AG04449 (cell line): ENCODE measurements at regions of chr1 and their contacts with region 1.

Region 1: DNA sequence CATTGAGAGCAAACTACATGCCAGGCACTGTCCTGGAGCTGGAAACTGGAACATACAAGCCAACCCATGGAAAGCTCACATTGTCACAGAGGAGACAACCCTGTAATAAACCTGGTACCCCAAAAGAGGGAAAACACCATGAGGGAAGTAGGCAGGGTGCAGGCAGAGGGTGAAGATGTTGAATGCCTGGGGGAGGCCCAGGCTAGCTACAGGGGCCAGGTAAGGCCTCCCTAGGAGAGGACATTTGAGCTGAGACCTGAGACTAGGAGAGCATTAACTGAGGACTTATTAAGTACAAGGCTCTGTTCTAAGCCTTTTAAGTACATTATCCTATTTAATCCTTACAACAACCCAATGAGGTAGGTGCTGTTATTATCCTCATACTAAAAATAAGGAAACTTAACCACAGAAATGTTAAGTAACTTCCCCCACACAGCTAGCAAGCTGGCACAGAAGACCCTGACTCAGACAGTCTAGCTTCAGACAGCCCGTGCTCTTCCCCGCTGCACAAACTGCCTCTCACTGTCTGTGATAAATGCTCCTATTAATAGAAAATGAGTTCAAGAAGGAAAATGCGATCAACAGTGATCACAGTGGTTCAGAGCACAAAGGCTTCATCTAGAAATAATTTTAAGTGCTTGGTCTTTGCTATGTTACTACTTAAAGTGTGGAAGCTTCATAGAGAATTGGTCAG is 41.8 kb downstream of the ZNF281 start:
- DNase-seq: peak; percentile 91
- H3K4me3 ChIP-seq: no peak overlapping the region
- CTCF ChIP-seq: no peak

Region 2: GRCh38 chr1:200354243-200354642 is 13.7 kb before region 1 on chr1:
- CTCF ChIA-PET with region 1: interaction called, 10 read pairs
- POLR2A ChIA-PET with region 1: interaction called, 3 read pairs
- DNase-seq: no peak
- H3K4me3 ChIP-seq: no peak overlapping the region
- CTCF ChIP-seq: no peak

Region 3: DNA sequence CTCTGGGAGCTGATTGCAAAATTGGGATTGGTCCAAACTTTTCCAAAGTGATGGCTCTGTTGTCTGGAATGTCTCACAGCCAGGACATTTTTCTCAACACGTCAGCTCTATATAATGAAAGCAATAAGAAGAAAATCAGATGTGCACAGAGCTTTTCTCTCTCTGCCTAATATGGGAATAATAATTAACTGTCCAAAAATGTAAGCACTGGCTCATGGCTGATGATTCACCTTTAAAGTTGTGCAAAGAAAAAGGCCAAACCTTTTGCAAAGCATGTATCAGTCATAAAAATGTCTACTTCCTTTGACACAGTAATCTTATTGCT is 11.4 kb after region 1 on chr1:
- CTCF ChIA-PET with region 1: interaction called, 7 read pairs
- POLR2A ChIA-PET with region 1: interaction called, 17 read pairs
- DNase-seq: peak; percentile 97
- H3K4me3 ChIP-seq: no peak overlapping the region
- CTCF ChIP-seq: no peak